ENCODE measurements at regions of chr1 and their contacts with region 1.

Region 1: GRCh38 chr1:219066631-219067349 is 106.9 kb upstream of the LYPLAL1 start:
- DNase-seq: peak; percentile 62
- H3K4me3 ChIP-seq: no peak overlapping the region
- H3K27ac ChIP-seq: peak overlapping the region; percentile 65
- H3K4me1 ChIP-seq: peaks cover 14% of the 10 kb centered on the region
- H3K27me3 ChIP-seq: no peaks in the 10 kb centered on the region
- CTCF ChIP-seq: peak; percentile 66 to 70

Region 2: DNA sequence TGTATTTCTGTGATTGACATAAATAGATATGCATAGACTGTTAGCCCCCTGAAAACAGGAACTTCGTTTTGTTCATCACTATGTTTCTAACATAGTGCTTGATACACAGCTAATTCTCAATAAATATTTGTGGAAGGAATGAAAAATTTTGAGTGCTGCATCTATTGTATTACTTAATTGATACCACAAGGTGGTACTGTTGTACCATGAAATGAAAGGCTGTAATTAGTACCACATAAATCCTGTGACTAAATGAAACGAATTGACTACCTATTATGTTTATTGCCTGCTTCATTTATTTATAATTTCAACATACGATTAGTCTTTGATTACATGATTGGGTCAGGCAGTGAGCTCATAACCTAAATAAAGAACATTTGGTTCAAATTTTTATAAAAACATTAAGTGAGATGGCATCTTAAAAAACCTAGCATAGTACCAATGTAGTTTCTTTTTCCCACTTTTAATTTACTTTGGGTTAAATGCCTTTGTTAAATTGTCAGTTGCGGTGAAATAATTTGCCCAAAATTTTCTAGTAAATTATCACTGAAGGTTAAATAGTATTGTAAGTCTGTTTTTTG is 736.7 kb before region 1 on chr1:
- CTCF ChIA-PET with region 1: interaction called, 4 read pairs
- dilution Hi-C with region 1: no loop called
- in situ Hi-C with region 1: loop called in 1 of 2 experiments (anchors 25 kb)
- intact Hi-C with region 1: loop called (anchors 5 kb)
- DNase-seq: peak; percentile 18
- H3K4me3 ChIP-seq: no peak overlapping the region
- H3K27ac ChIP-seq: no peak overlapping the region
- H3K4me1 ChIP-seq: no peaks in the 10 kb centered on the region
- H3K27me3 ChIP-seq: no peaks in the 10 kb centered on the region
- CTCF ChIP-seq: peak; percentile 51

Region 3: DNA sequence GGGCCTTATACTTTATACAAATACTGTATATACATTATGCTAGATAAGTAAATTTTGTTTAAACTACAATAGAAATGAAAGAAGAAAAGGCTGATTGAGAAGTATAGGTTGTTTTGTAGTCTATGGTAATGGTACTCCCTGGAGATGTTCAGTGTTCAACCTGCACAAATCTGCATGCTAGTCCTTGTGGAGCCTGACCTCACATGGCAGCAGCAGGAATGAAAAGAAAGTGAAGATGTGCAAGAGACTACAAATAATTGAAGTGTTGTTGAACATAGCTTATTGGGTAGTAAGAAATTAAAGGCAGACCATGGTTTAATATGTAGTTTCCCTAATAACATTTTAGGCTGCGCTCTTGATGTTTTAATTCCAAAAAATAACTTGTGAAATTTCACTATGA is 520.5 kb before region 1 on chr1:
- CTCF ChIA-PET with region 1: no interaction called
- dilution Hi-C with region 1: no loop called
- in situ Hi-C with region 1: no loop called
- intact Hi-C with region 1: loop called (anchors 1 kb)
- DNase-seq: no peak
- H3K4me3 ChIP-seq: no peak overlapping the region
- H3K27ac ChIP-seq: no peak overlapping the region
- H3K4me1 ChIP-seq: no peaks in the 10 kb centered on the region
- H3K27me3 ChIP-seq: no peaks in the 10 kb centered on the region
- CTCF ChIP-seq: peak in 1 of 2 donors; percentile 32

Region 4: GRCh38 chr1:218679988-218680748 is 386.6 kb before region 1 on chr1:
- CTCF ChIA-PET with region 1: no interaction called
- dilution Hi-C with region 1: no loop called
- in situ Hi-C with region 1: no loop called
- intact Hi-C with region 1: loop called (anchors 2 kb)
- DNase-seq: peak; percentile 63
- H3K4me3 ChIP-seq: no peak overlapping the region
- H3K27ac ChIP-seq: peak overlapping the region; percentile 76
- H3K4me1 ChIP-seq: peaks cover 47% of the 10 kb centered on the region
- H3K27me3 ChIP-seq: no peaks in the 10 kb centered on the region
- CTCF ChIP-seq: no peak

Region 5: DNA sequence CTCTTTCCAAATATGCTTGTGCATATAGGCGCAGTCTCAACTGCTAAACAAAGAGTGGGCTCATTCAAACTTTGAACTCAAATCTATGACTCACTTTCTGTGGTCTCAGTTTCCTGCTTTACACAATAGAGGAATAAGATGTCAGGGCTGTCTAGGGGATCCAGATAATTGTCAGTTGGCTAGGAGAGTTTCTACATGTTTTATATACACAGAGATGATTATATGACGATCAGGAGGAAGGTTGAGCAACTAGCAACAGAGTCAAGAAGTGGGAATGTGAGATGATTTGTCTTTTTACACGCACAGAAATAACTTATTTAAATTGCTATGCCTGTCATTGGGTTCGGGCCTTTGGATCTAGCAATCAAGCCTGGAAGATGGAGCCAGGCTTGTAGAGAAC is 192.5 kb before region 1 on chr1:
- CTCF ChIA-PET with region 1: no interaction called
- dilution Hi-C with region 1: no loop called
- in situ Hi-C with region 1: no loop called
- intact Hi-C with region 1: loop called (anchors 5 kb)
- DNase-seq: peak; percentile 97
- H3K4me3 ChIP-seq: no peak overlapping the region
- H3K27ac ChIP-seq: peak overlapping the region; percentile 88
- H3K4me1 ChIP-seq: peaks cover 21% of the 10 kb centered on the region
- H3K27me3 ChIP-seq: no peaks in the 10 kb centered on the region
- CTCF ChIP-seq: no peak

Region 6: DNA sequence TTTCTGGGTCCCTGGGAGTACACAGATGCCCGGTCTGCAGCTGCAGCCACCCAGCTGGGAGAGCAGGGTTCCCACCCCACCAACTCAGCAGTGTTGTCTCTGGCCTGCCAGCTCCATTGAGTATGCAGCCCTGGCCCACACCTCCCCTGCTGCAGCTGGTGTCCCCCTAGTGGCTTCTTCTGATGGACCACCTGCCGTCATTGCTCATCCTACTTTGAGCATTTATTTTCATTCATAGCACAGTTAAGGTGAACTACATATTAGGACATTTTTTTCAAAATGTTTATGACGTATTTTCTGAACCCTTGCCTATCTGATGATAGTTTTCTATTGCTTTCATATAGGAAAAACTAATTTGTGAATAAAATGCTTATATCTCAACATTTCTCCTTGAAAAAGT is 82.9 kb before region 1 on chr1:
- CTCF ChIA-PET with region 1: no interaction called
- dilution Hi-C with region 1: no loop called
- in situ Hi-C with region 1: no loop called
- intact Hi-C with region 1: no loop called
- DNase-seq: no peak
- H3K4me3 ChIP-seq: no peak overlapping the region
- H3K27ac ChIP-seq: no peak overlapping the region
- H3K4me1 ChIP-seq: no peaks in the 10 kb centered on the region
- H3K27me3 ChIP-seq: no peaks in the 10 kb centered on the region
- CTCF ChIP-seq: no peak

Region 7: GRCh38 chr1:219264561-219264960 is 197.8 kb after region 1 on chr1:
- CTCF ChIA-PET with region 1: no interaction called
- dilution Hi-C with region 1: no loop called
- in situ Hi-C with region 1: no loop called
- intact Hi-C with region 1: no loop called
- DNase-seq: no peak
- H3K4me3 ChIP-seq: no peak overlapping the region
- H3K27ac ChIP-seq: no peak overlapping the region
- H3K4me1 ChIP-seq: no peaks in the 10 kb centered on the region
- H3K27me3 ChIP-seq: no peaks in the 10 kb centered on the region
- CTCF ChIP-seq: no peak

Region 8: DNA sequence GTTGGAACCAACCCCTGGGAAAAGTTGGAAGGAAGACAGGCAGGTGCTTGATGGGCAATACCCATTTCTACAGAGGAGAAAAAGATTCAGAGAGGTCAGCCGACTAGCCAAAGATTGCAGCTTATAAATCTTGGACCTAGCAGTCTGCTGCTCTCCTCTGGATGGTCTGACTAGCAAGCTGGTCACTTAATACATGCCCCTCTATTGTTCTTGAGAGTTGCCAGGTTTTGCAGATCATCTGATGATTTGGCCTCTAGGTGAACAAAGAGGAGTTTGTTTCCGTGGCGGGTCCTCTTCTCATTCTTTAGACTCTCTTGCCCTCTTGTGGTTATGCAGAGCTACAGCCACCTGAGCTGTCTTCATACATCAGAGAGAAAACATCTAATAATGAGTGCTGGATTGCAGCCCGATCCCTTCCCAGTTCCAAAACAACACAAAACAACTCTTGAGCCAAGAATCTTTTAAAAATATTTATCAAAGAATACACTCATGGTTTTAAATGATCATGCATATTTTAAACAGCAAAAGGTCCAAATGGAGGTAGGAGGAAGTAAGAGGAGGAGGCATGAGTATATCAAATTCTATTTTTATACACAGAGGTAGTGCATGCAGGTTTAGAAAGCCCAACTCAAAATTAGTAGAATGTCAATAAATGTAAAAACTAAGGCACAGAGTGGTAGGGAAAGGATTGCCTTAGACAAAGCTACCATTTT is 745.9 kb after region 1 on chr1:
- CTCF ChIA-PET with region 1: no interaction called
- dilution Hi-C with region 1: no loop called
- in situ Hi-C with region 1: no loop called
- intact Hi-C with region 1: loop called (anchors 5 kb)
- DNase-seq: peak; percentile 63
- H3K4me3 ChIP-seq: no peak overlapping the region
- H3K27ac ChIP-seq: no peak overlapping the region
- H3K4me1 ChIP-seq: no peaks in the 10 kb centered on the region
- H3K27me3 ChIP-seq: peaks cover 21% of the 10 kb centered on the region
- CTCF ChIP-seq: peak; percentile 87 to 94